T-cell (primary cell): ENCODE measurements at regions of chr9 and their contacts with region 1.

Region 1: DNA sequence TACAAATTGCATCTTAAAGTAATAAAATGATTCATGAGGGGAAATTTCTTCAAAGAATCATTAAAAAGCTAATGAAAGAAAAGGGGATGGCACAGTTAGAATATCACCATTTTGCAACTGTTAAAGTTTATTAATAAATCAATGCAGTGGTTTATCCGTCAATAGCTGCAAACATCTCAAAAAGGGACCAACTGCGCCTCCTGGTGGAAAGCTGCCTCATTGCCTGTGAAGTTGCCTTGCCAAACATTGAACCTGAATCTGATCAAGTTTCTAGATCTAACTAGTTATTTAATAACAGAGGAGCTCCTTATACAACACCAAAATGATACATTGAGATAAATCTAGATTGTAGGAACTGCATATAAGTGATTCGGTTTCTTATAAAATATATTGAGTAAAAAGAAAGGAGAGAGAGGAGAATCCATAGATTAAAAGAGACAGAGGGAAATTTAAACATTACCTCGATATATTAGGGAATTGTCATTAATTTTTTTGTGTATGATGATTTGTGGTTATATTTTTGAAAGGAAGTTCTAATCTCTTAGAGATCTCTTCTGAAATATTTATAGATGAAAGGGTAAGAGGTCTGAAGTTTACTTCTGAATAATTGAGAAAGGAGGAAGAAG is 6.9 kb upstream of the NDUFB6 start:
- DNase-seq: peak; percentile 46 to 88 (median 75)
- ATAC-seq: peak; percentile 59 to 74 (median 64)
- H3K4me3 ChIP-seq: no peak overlapping the region
- H3K4me3 Mint-ChIP-seq: no peak overlapping the region
- H3K27ac ChIP-seq: no peak overlapping the region
- H3K27ac Mint-ChIP-seq: no peak overlapping the region
- H3K4me1 ChIP-seq: no peaks in the 10 kb centered on the region
- H3K4me1 Mint-ChIP-seq: peaks cover 0 to 3% (median 0%) of the 10 kb centered on the region in 3 donors
- H3K27me3 ChIP-seq: peaks cover 0 to 3% of the 10 kb centered on the region in 2 experiments
- H3K27me3 Mint-ChIP-seq: peaks cover 7 to 22% of the 10 kb centered on the region in 2 donors

Region 2: GRCh38 chr9:32384364-32385151 is 195.3 kb before region 1 on chr9 and contains the start of gene ACO1:
- CTCF ChIA-PET with region 1: interaction called, 201 to 338 read pairs
- POLR2A ChIA-PET with region 1: interaction called in 1 of 2 experiments, 4 read pairs
- DNase-seq: peak; percentile 58 to 93 (median 80)
- ATAC-seq: peak; percentile 97 to 98 (median 97)
- H3K4me3 ChIP-seq: peak within 1 kb of the TSS; percentile 75 to 77
- H3K4me3 Mint-ChIP-seq: peak within 1 kb of the TSS; percentile 82 to 85 (median 84)
- H3K27ac ChIP-seq: no peak within 1 kb of the TSS
- H3K27ac Mint-ChIP-seq: peak within 1 kb of the TSS in 1 of 2 donors; percentile 57
- H3K4me1 ChIP-seq: peaks cover 3 to 16% of the 10 kb centered on the region in 2 experiments
- H3K4me1 Mint-ChIP-seq: peaks cover 17 to 26% (median 25%) of the 10 kb centered on the region in 3 donors
- H3K27me3 ChIP-seq: peaks cover 3 to 7% of the 10 kb centered on the region in 2 experiments
- H3K27me3 Mint-ChIP-seq: peaks cover 10 to 11% of the 10 kb centered on the region in 2 donors
- total RNA-seq, gene ACO1: 5.2 to 8.5 (median 8.0) TPM

Region 3: DNA sequence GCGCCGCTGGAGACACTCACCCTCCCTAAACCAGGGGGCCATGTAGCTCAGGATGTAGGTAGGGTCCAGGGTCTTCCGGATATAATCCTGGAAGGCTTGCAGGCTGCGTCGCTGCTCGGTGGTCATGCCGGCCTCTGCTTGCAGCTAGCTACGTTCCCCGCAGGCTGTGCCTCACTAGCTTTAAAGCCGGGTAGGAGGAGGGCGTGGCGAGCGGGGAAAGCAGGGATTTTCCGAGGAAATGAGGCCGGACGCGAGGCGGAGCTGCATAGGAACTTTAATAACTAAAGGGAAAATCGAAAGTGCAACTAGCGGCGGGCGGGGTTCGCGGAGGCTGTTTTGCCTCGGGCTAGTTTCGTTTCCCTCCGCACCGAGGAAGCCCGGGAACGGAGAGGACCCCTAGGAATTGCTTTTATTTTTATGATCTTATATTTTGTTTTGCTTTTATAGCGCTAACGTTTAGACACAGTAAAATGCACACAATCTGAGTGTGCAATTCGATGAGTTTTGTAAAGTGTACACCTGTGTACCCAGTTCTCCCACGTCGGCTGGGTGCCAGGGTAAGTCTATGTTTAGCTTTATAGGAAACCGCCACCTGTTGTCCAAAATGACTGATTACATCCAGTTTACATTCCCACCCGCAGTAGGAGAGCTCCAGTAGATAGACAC is 53.6 kb before region 1 on chr9 and contains the start of gene RIGI:
- CTCF ChIA-PET with region 1: interaction called, 5 to 13 read pairs
- POLR2A ChIA-PET with region 1: no interaction called
- DNase-seq: peak; percentile 40 to 92 (median 76)
- ATAC-seq: peak; percentile 78 to 84 (median 83)
- H3K4me3 ChIP-seq: peak within 1 kb of the TSS; percentile 77 to 85
- H3K4me3 Mint-ChIP-seq: peak within 1 kb of the TSS; percentile 87 to 98 (median 92)
- H3K27ac ChIP-seq: peak within 1 kb of the TSS; percentile 74
- H3K27ac Mint-ChIP-seq: peak within 1 kb of the TSS; percentile 97 to 99
- H3K4me1 ChIP-seq: peaks cover 16 to 17% of the 10 kb centered on the region in 2 experiments
- H3K4me1 Mint-ChIP-seq: peaks cover 49 to 64% (median 57%) of the 10 kb centered on the region in 3 donors
- H3K27me3 ChIP-seq: no peaks in the 10 kb centered on the region
- H3K27me3 Mint-ChIP-seq: no peaks in the 10 kb centered on the region
- total RNA-seq, gene RIGI: 14.0 to 27.1 (median 19.3) TPM

Region 4: DNA sequence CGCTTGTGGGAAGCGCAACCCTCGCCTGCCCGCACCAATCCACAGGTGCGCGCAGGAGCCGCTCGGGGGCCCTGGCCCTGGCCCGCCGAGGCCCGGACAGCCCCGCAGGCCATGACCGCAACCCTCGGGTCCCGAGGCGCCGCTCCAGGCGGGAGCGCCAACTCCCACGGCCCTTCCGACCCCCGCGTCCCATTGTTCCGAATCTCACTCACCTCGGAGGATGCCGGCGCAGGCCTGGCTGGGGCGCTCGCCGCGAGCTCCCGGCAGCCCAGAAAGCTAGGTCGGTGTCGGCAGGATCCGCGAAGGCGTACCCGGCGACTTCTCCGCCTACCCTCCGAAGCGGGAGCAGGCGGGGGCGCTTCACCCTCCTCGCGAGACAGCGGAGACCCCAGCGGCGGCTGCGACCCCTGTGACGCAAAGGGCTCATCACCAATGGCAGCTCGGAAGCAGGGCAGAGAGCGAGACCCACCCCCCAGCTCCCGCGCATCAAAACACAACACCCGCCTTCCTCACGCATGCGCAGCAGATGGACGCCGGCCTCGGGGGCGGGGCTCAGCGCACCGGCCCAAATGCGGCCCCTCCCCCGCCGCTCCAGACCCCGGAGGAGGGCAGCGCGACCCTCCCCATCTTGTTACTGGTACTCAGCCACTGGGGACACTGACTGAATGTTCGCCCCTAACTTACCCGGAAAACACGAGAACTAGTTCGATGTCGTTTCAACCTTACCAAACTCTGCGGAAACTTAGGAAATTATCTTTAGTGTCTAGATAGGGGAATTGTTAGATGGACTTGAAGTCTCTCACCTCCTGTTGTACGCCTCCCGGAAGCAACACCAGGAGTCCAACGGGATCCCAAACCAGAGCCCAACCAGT is 29.0 kb before region 1 on chr9:
- CTCF ChIA-PET with region 1: interaction called, 7 to 22 read pairs
- POLR2A ChIA-PET with region 1: interaction called, 3 read pairs
- DNase-seq: peak; percentile 86 to 99 (median 97)
- ATAC-seq: peak; percentile 82 to 87 (median 85)
- H3K4me3 ChIP-seq: peak overlapping the region; percentile 89 to 91
- H3K4me3 Mint-ChIP-seq: peak overlapping the region; percentile 91 to 98 (median 97)
- H3K27ac ChIP-seq: peak overlapping the region; percentile 99
- H3K27ac Mint-ChIP-seq: peak overlapping the region; percentile 99 to 100
- H3K4me1 ChIP-seq: peaks cover 13 to 24% of the 10 kb centered on the region in 2 experiments
- H3K4me1 Mint-ChIP-seq: peaks cover 57 to 65% (median 59%) of the 10 kb centered on the region in 3 donors
- H3K27me3 ChIP-seq: no peaks in the 10 kb centered on the region
- H3K27me3 Mint-ChIP-seq: no peaks in the 10 kb centered on the region

Region 5: GRCh38 chr9:32968101-32969011 is 388.5 kb after region 1 on chr9:
- CTCF ChIA-PET with region 1: interaction called, 9 to 14 read pairs
- POLR2A ChIA-PET with region 1: no interaction called
- DNase-seq: peak in 30 of 35 experiments; percentile 11 to 70 (median 40)
- ATAC-seq: no peak
- H3K4me3 ChIP-seq: no peak overlapping the region
- H3K4me3 Mint-ChIP-seq: no peak overlapping the region
- H3K27ac ChIP-seq: no peak overlapping the region
- H3K27ac Mint-ChIP-seq: no peak overlapping the region
- H3K4me1 ChIP-seq: no peaks in the 10 kb centered on the region
- H3K4me1 Mint-ChIP-seq: peaks cover 0 to 2% (median 2%) of the 10 kb centered on the region in 3 donors
- H3K27me3 ChIP-seq: no peaks in the 10 kb centered on the region
- H3K27me3 Mint-ChIP-seq: no peaks in the 10 kb centered on the region